GM10248 (cell line): ENCODE measurements at regions of chr7 and their contacts with region 1.

Region 1: DNA sequence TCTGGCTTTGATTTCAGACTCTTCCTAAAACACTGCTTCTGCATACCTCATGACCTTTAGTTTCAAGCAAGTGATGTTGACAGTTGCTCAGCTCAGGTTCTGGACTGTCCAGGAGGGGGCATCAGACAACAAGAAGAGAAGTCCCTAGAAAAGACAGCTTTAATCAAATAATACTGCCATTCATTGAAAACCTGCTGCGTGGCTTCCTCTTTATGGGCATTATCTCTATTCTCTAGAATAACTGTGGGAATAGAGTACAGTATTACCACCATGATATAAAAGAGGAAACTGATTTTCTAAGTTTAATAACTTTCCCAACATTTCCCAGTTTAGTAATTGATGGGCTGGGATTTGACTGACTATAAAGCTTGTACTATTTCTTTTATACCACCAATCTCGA is 170.4 kb downstream of the SNX13 start:
- DNase-seq: peak; percentile 45
- CTCF ChIP-seq: peak; percentile 86

Region 2: GRCh38 chr7:17599733-17600685 is 169.9 kb before region 1 on chr7:
- CTCF ChIA-PET with region 1: no interaction called
- POLR2A ChIA-PET with region 1: no interaction called
- DNase-seq: no peak
- CTCF ChIP-seq: no peak

Region 3: DNA sequence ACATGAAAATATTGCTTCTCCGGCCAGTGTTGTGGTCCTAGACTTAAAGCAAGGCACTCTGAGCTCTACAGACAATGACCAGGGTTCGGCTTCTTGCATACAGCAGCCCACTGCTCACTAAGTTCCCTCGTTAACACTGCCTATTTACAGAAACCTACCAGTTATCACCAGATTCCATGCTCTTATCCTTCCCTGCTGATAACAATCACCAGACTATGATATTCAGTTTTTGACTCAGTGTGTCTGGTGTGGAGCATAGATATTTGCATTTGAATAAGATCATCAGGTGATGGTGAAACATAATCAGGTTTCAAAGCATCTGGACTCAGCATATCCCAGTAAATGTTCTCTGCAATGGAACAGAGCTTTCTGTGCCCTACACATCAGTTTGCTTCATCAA is 11.9 kb before region 1 on chr7:
- CTCF ChIA-PET with region 1: interaction called, 35 read pairs
- POLR2A ChIA-PET with region 1: no interaction called
- DNase-seq: no peak
- CTCF ChIP-seq: no peak

Region 4: GRCh38 chr7:17792075-17792936 is 22.4 kb after region 1 on chr7:
- CTCF ChIA-PET with region 1: interaction called, 11 read pairs
- POLR2A ChIA-PET with region 1: no interaction called
- DNase-seq: no peak
- CTCF ChIP-seq: no peak

Region 5: DNA sequence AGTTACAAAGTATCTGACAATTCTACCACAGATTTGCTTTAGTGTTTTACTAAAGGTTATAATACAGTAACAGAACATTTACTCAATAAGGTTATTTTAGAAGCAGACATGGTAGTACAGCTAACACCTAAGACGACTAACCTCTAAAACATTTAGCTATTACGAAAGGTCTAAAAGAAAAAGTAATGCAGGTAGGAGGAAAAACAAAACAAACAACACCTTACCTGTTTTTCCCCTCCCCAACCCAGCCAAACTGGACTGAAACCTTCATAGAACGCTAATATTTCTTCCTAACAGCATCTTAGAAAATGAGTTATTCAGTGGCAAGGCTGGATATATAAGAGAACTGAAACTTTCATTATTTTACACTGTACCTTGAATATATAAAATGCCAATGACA is 59.1 kb after region 1 on chr7:
- CTCF ChIA-PET with region 1: no interaction called
- POLR2A ChIA-PET with region 1: no interaction called
- DNase-seq: no peak
- CTCF ChIP-seq: no peak

Region 6: GRCh38 chr7:17849504-17849903 is 79.6 kb after region 1 on chr7:
- CTCF ChIA-PET with region 1: no interaction called
- POLR2A ChIA-PET with region 1: no interaction called
- DNase-seq: no peak
- CTCF ChIP-seq: no peak

Region 7: DNA sequence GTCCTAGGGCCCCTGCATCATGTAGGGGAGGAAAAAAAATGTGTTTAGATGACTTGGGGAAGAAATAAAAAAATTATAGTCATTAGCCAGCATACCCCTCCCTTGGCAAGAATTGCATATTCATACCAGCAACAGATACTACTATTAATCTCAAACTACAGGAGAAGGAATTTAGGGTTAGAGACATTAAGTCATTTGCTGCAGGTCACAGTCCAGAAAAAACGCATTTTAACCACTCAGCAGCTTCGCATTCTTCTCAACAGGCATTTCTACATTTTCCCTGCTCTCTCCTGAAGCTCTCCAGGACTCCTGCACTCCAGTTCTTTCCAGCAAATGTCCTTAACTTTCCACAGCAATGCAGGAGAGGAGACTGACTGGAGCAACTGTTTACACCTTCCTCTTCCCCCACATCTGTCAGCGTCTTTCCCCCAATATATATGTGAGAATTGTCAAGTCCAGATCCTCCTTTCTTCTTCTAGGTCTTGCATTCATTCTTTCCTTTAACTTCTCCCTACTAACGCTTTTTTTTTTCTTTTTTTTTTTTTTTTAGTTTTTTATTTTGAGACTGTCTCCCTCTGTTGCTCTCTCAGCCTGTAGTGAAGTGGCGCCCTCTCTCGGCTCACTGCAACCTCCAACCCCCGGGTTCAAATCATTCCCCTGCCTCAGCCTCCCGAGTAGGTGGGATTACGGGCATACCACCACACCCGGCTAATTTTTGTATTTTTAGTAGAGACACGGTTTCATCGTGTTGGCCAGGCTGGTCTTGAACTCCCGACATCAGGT is 222.1 kb after region 1 on chr7:
- CTCF ChIA-PET with region 1: interaction called, 76 read pairs
- POLR2A ChIA-PET with region 1: no interaction called
- DNase-seq: no peak
- CTCF ChIP-seq: peak; percentile 36

Region 8: DNA sequence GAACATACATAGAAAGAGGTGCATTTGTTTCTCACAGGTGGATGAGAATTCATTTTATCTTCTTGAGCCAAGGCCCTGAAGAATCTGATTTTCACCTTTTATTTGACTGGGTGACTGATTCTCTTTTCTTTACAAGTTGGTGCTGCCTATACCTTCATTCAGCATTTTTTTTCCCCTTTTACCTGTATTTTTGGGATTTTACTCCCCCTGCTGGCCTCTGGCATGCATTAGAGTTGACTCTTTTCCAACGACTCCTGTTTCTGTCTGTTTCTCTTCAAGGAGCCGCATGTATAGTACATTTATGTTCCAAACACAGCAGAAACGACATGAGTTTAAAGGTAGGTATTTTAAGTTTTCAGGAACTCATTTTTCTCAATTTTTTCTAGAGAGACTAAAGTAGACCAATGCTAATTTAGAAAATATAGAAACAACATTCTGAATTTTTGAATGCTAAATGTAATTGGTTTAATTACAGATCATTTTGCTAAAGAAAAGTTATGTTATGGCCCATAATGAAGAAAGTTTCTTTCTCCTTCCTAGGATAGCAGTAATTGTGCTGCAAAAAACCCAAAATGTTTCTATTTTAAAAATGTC is 575.8 kb after region 1 on chr7:
- CTCF ChIA-PET with region 1: interaction called, 22 read pairs
- POLR2A ChIA-PET with region 1: no interaction called
- DNase-seq: no peak
- CTCF ChIP-seq: peak; percentile 69